GM12878 (cell line): ENCODE measurements at regions of chr2 and their contacts with region 1.

Region 1: GRCh38 chr2:46364797-46365457 is 67.7 kb downstream of the EPAS1 start:
- DNase-seq: no peak
- ATAC-seq: peak; percentile 79
- H3K4me3 ChIP-seq: no peak overlapping the region
- H3K27ac ChIP-seq: no peak overlapping the region
- H3K4me1 ChIP-seq: no peaks in the 10 kb centered on the region
- H3K27me3 ChIP-seq: peaks cover 0 to 7% of the 10 kb centered on the region in 2 experiments; a peak in 2 of 4 replicates
- CTCF ChIP-seq: peak; percentile 65 to 79 (median 78)
- EP300 ChIP-seq: no peak
- POLR2A ChIP-seq: no peak
- RAD21 ChIP-seq: peak; percentile 81

Region 2: GRCh38 chr2:45643543-45644542 is 721.1 kb before region 1 on chr2:
- CTCF ChIA-PET with region 1: no interaction called
- POLR2A ChIA-PET with region 1: no interaction called
- RAD21 ChIA-PET with region 1: interaction called, 3 read pairs
- SMC1A ChIA-PET with region 1: no interaction called
- in situ Hi-C with region 1: loop called (anchors 25 kb)
- intact Hi-C with region 1: no loop called
- DNase-seq: no peak
- ATAC-seq: peak; percentile 99
- H3K4me3 ChIP-seq: peak overlapping the region; percentile 69; the same call in 1 of the 2 replicates
- H3K27ac ChIP-seq: no peak overlapping the region
- H3K4me1 ChIP-seq: no peaks in the 10 kb centered on the region
- H3K27me3 ChIP-seq: no peaks in the 10 kb centered on the region; a peak in 1 of 4 replicates
- CTCF ChIP-seq: peak; percentile 80 to 84 (median 81)
- EP300 ChIP-seq: no peak
- POLR2A ChIP-seq: no peak
- RAD21 ChIP-seq: peak; percentile 93

Region 3: GRCh38 chr2:46010925-46011490 is 353.9 kb before region 1 on chr2:
- CTCF ChIA-PET with region 1: interaction called, 14 read pairs
- POLR2A ChIA-PET with region 1: no interaction called
- RAD21 ChIA-PET with region 1: interaction called, 9 read pairs
- SMC1A ChIA-PET with region 1: interaction called, 10 read pairs
- in situ Hi-C with region 1: loop called (anchors 5 kb)
- intact Hi-C with region 1: loop called (anchors 1 kb)
- DNase-seq: no peak
- ATAC-seq: peak; percentile 85
- H3K4me3 ChIP-seq: no peak overlapping the region
- H3K27ac ChIP-seq: no peak overlapping the region
- H3K4me1 ChIP-seq: peaks cover 4% of the 10 kb centered on the region; the same call in 1 of the 2 replicates
- H3K27me3 ChIP-seq: no peaks in the 10 kb centered on the region
- CTCF ChIP-seq: peak; percentile 40 to 67 (median 55); a peak in 5 of 6 replicates
- EP300 ChIP-seq: no peak
- POLR2A ChIP-seq: no peak
- RAD21 ChIP-seq: peak; percentile 67

Region 4: DNA sequence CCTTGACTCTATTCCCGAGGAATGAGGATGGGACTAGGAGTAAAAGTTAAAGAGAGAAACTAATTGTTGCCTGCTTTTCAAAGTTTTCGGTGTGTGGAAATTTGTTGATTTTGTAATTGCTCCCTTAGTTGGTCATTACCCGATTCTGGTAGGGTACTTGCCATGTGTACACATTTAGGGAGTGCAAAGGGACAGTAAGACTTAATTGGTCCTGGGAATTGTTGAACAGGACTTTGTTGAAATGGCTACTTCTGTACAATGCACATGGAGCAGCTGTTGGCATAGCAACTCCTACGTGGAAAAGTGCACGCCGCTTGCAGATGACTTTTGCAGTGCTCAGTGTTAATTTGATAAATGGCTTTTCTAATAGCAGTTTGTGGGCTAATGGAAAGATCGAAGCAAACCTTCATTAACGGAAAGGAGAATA is 44.8 kb before region 1 on chr2:
- CTCF ChIA-PET with region 1: interaction called, 3 read pairs
- POLR2A ChIA-PET with region 1: no interaction called
- RAD21 ChIA-PET with region 1: interaction called, 13 read pairs
- SMC1A ChIA-PET with region 1: interaction called, 7 read pairs
- in situ Hi-C with region 1: no loop called
- intact Hi-C with region 1: no loop called
- DNase-seq: no peak
- ATAC-seq: no peak
- H3K4me3 ChIP-seq: no peak overlapping the region
- H3K27ac ChIP-seq: no peak overlapping the region
- H3K4me1 ChIP-seq: no peaks in the 10 kb centered on the region
- H3K27me3 ChIP-seq: no peaks in the 10 kb centered on the region; a peak in 1 of 4 replicates
- CTCF ChIP-seq: no peak
- EP300 ChIP-seq: no peak
- POLR2A ChIP-seq: no peak
- RAD21 ChIP-seq: no peak

Region 5: GRCh38 chr2:46461011-46461674 is 96.2 kb after region 1 on chr2:
- CTCF ChIA-PET with region 1: interaction called, 25 read pairs
- POLR2A ChIA-PET with region 1: no interaction called
- RAD21 ChIA-PET with region 1: interaction called, 4 read pairs
- SMC1A ChIA-PET with region 1: interaction called, 9 read pairs
- in situ Hi-C with region 1: no loop called
- intact Hi-C with region 1: loop called (anchors 1 kb)
- DNase-seq: peak; percentile 39
- ATAC-seq: peak; percentile 85
- H3K4me3 ChIP-seq: no peak overlapping the region; the same call in 1 of the 2 replicates
- H3K27ac ChIP-seq: 0 out of 2 replicates have a peak overlapping the region, but pooled peaks have one; percentile 0
- H3K4me1 ChIP-seq: peaks cover 18% of the 10 kb centered on the region
- H3K27me3 ChIP-seq: no peaks in the 10 kb centered on the region; a peak in 1 of 4 replicates
- CTCF ChIP-seq: peak; percentile 97 to 99 (median 99); a peak in 5 of 6 replicates
- EP300 ChIP-seq: no peak
- POLR2A ChIP-seq: no peak
- RAD21 ChIP-seq: peak; percentile 96

Region 6: GRCh38 chr2:46481198-46482193 is 116.6 kb after region 1 on chr2:
- CTCF ChIA-PET with region 1: no interaction called
- POLR2A ChIA-PET with region 1: no interaction called
- RAD21 ChIA-PET with region 1: no interaction called
- SMC1A ChIA-PET with region 1: no interaction called
- in situ Hi-C with region 1: no loop called
- intact Hi-C with region 1: no loop called
- DNase-seq: no peak
- ATAC-seq: no peak
- H3K4me3 ChIP-seq: no peak overlapping the region
- H3K27ac ChIP-seq: no peak overlapping the region
- H3K4me1 ChIP-seq: peaks cover 15% of the 10 kb centered on the region
- H3K27me3 ChIP-seq: no peaks in the 10 kb centered on the region
- CTCF ChIP-seq: no peak
- EP300 ChIP-seq: no peak
- POLR2A ChIP-seq: no peak
- RAD21 ChIP-seq: no peak

Region 7: DNA sequence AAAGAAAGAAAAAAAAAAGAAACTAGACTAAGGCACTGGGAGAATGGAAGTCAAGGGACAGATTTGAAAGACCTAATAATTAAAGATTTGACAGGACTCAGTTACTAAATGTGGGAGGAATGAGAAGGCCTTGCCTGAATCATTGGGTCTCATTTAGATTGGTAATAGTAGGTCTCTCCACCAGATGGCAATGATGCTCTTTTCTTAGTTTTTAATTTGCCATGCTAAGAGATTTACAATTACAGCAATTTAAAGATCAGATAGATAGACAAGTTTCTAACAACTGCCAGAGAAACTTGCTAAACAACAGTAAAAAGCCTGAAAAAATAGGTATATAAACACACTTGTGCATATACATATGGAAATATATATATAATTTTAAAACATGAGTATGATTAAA is 267.4 kb after region 1 on chr2:
- CTCF ChIA-PET with region 1: no interaction called
- POLR2A ChIA-PET with region 1: no interaction called
- RAD21 ChIA-PET with region 1: no interaction called
- SMC1A ChIA-PET with region 1: no interaction called
- in situ Hi-C with region 1: no loop called
- intact Hi-C with region 1: no loop called
- DNase-seq: no peak
- ATAC-seq: peak; percentile 60
- H3K4me3 ChIP-seq: no peak overlapping the region
- H3K27ac ChIP-seq: no peak overlapping the region
- H3K4me1 ChIP-seq: no peaks in the 10 kb centered on the region
- H3K27me3 ChIP-seq: no peaks in the 10 kb centered on the region
- CTCF ChIP-seq: peak; percentile 32 to 43 (median 42); a peak in 4 of 6 replicates
- EP300 ChIP-seq: no peak
- POLR2A ChIP-seq: no peak
- RAD21 ChIP-seq: peak; percentile 63